Activated CD8-positive, alpha-beta T cell treated with anti-CD3 and anti-CD28 coated beads for 36 hours (primary cell): ENCODE measurements at regions of chr3 and their contacts with region 1.

Region 1: DNA sequence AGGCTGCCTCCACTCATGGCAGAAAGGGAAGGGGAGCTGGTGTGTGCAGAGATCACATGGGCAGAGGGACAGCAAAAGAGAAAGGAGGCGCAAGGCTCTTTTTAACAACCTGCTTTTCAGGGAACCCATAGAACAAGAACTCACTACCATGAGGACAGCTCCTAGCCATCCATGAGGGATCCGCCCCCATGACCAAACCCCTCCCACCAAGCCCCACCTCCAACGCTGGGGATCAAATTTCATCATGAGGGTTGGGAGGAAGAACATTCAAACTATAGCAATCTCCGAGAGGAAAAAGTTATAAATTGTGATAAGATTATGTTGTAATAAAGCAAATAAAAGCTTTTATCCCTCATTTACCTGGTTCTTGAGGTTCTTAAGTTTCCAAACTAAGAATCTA is 84.7 kb upstream of the LMCD1 start:
- DNase-seq: peak; percentile 4
- ATAC-seq: no peak
- H3K4me3 Mint-ChIP-seq: no peak overlapping the region
- H3K27ac Mint-ChIP-seq: no peak overlapping the region
- H3K4me1 Mint-ChIP-seq: peaks cover 6% of the 10 kb centered on the region
- H3K27me3 Mint-ChIP-seq: no peaks in the 10 kb centered on the region
- CTCF ChIP-seq: no peak

Region 2: DNA sequence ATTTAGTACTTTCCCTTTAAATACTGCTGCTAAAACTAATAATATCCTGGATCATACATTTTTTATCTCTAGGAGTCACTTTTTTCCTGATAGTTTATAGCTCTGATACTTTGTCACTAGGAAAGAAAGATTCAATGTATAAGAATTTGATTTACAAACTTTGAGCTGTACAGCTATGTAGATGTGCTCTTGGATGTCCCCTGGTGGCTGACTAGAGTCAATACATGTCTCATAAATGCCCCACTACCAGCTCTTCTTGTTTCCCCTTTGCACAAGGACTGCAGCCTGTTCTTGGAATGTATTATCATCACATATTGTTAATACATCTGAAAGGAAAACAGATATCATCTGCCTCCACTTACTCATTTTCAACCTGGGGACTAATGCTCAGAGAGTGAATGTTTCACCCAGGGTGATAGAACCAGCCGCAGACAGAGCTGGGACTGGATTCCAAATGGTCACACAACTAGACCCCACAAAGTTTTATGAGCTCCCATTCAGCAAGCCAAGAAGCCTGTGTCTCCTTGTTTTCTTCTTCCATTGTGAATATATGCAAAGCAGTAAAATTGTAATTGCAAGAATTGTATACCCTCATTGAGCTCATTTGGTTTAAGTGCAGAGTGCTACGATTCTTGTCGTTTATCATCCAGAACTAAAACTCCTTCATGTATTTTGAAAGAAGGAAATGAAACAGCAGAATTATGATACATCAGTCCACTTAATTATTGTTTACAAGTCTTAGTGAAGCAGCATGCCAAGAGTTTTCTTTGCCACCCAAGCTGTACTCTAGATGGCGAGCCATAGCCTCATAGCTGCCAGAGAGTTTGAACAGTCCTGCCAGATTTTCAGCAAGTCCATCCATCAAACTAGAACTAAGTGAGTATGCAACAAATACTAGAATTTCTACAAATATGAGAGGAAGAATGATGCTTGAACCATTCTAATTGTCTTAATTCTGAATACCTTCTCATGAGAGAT is 177.0 kb before region 1 on chr3:
- CTCF ChIA-PET with region 1: interaction called, 10 read pairs
- POLR2A ChIA-PET with region 1: no interaction called
- intact Hi-C with region 1: no loop called
- DNase-seq: peak; percentile 28
- ATAC-seq: peak; percentile 74
- H3K4me3 Mint-ChIP-seq: no peak overlapping the region
- H3K27ac Mint-ChIP-seq: no peak overlapping the region
- H3K4me1 Mint-ChIP-seq: no peaks in the 10 kb centered on the region
- H3K27me3 Mint-ChIP-seq: no peaks in the 10 kb centered on the region
- CTCF ChIP-seq: peak; percentile 78

Region 3: DNA sequence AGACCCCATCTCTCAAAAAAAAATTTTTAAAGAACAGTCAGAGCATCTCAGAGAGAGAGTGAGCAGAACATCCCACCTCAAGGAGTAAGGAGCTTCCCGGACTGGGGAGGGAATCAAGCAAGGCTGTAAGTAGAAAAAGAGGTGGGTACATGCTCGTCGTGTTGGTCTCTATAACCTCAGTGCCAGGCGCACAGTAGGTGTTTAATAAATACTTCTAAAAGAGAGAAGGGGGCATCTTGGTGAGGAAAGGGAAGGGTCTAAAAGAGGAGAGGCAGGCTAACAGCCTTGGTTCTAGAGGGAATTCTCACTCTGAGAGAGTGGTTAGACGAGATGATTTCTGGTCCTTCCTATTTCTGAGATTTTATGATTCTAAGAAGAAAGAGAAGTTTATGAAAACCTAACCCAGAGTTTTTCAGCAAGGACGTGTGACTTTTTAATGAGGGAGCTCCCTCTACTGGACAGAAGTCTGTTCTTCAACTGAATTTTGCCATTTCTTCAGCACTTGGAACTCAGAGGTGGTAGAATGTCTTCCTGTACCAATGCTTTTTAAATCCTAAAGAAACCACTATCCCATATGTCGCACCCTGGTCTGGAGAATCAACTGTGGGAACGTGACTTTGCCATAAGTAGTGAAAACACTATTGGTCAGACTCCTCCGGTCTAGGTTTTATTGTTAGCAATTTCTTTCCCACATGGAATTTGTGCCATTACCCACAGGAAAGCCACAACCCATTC is 115.1 kb before region 1 on chr3:
- CTCF ChIA-PET with region 1: interaction called, 14 read pairs
- POLR2A ChIA-PET with region 1: interaction called, 3 read pairs
- intact Hi-C with region 1: no loop called
- DNase-seq: peak; percentile 3
- ATAC-seq: no peak
- H3K4me3 Mint-ChIP-seq: no peak overlapping the region
- H3K27ac Mint-ChIP-seq: no peak overlapping the region
- H3K4me1 Mint-ChIP-seq: peaks cover 4% of the 10 kb centered on the region
- H3K27me3 Mint-ChIP-seq: no peaks in the 10 kb centered on the region
- CTCF ChIP-seq: peak; percentile 65

Region 4: DNA sequence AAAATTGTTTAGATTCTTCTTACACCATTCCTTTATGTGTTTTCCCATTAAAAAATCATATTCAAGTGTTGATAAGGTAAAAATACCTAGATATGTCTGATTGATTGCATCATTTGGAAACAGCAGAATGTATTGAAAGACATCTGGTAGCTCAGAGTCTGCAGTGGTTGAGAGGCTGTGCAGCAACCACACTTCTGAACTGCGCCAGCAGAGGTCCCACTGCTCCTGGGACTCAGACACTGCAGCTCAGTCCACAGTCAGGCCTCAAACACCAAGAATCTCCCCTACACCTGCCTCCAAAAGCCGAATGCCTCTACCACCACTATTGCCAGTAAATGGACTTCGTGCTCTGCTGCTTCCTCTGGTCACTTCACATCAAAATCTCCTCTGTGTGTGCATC is 92.2 kb before region 1 on chr3:
- CTCF ChIA-PET with region 1: interaction called, 121 read pairs
- POLR2A ChIA-PET with region 1: no interaction called
- intact Hi-C with region 1: loop called (anchors 2 kb)
- DNase-seq: peak; percentile 69
- ATAC-seq: peak; percentile 80
- H3K4me3 Mint-ChIP-seq: no peak overlapping the region
- H3K27ac Mint-ChIP-seq: no peak overlapping the region
- H3K4me1 Mint-ChIP-seq: peaks cover 22% of the 10 kb centered on the region
- H3K27me3 Mint-ChIP-seq: no peaks in the 10 kb centered on the region
- CTCF ChIP-seq: peak; percentile 55

Region 5: DNA sequence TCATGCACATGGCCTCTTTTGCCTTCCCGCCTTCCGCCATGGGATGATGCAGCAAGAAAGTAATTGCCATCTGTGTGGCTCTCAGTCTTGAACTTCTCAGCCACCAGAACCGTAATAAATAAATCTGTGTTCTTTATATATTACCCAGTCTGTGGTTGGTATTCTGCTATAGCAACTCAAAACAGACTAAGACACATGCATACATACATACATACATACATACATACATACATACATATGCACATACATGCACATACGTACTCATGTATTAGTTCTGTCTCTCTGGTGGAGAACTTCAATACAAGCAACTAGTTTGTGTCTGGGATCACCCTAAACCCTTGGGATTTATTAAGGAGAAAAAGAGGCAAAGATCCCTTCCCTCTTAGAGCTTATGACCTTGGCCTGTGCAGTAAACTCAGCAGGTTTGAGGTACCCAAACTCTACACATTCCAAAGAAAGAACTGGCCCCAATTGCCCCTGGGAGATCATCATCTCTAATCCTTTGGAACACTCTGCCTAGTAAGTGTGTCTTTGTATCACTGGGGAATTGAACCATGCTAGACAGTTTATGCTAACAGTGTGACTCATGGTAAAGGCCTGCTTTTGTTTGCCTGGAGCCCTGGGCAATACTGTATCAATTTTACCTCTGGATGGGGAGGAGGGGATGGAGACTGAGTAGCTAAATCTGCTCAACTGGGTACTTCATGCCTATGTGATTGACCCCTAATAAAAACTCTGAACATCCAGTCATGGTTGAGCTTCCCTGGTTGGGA is 30.9 kb before region 1 on chr3:
- CTCF ChIA-PET with region 1: interaction called, 13 read pairs
- POLR2A ChIA-PET with region 1: no interaction called
- intact Hi-C with region 1: no loop called
- DNase-seq: no peak
- ATAC-seq: no peak
- H3K4me3 Mint-ChIP-seq: no peak overlapping the region
- H3K27ac Mint-ChIP-seq: no peak overlapping the region
- H3K4me1 Mint-ChIP-seq: no peaks in the 10 kb centered on the region
- H3K27me3 Mint-ChIP-seq: no peaks in the 10 kb centered on the region
- CTCF ChIP-seq: no peak

Region 6: GRCh38 chr3:8405144-8405543 is 11.8 kb before region 1 on chr3:
- CTCF ChIA-PET with region 1: interaction called, 14 read pairs
- POLR2A ChIA-PET with region 1: no interaction called
- intact Hi-C with region 1: no loop called
- DNase-seq: no peak
- ATAC-seq: no peak
- H3K4me3 Mint-ChIP-seq: no peak overlapping the region
- H3K27ac Mint-ChIP-seq: no peak overlapping the region
- H3K4me1 Mint-ChIP-seq: no peaks in the 10 kb centered on the region
- H3K27me3 Mint-ChIP-seq: no peaks in the 10 kb centered on the region
- CTCF ChIP-seq: no peak

Region 7: GRCh38 chr3:8450621-8451020 is 33.7 kb after region 1 on chr3:
- CTCF ChIA-PET with region 1: no interaction called
- POLR2A ChIA-PET with region 1: no interaction called
- intact Hi-C with region 1: no loop called
- DNase-seq: no peak
- ATAC-seq: no peak
- H3K4me3 Mint-ChIP-seq: no peak overlapping the region
- H3K27ac Mint-ChIP-seq: no peak overlapping the region
- H3K4me1 Mint-ChIP-seq: no peaks in the 10 kb centered on the region
- H3K27me3 Mint-ChIP-seq: peaks cover 22% of the 10 kb centered on the region
- CTCF ChIP-seq: no peak

Region 8: GRCh38 chr3:8822141-8822540 is 405.2 kb after region 1 on chr3:
- CTCF ChIA-PET with region 1: no interaction called
- POLR2A ChIA-PET with region 1: no interaction called
- intact Hi-C with region 1: no loop called
- DNase-seq: no peak
- ATAC-seq: no peak
- H3K4me3 Mint-ChIP-seq: no peak overlapping the region
- H3K27ac Mint-ChIP-seq: no peak overlapping the region
- H3K4me1 Mint-ChIP-seq: no peaks in the 10 kb centered on the region
- H3K27me3 Mint-ChIP-seq: no peaks in the 10 kb centered on the region
- CTCF ChIP-seq: no peak